ENCODE measurements at regions of chr1 and their contacts with region 1.

Region 1: DNA sequence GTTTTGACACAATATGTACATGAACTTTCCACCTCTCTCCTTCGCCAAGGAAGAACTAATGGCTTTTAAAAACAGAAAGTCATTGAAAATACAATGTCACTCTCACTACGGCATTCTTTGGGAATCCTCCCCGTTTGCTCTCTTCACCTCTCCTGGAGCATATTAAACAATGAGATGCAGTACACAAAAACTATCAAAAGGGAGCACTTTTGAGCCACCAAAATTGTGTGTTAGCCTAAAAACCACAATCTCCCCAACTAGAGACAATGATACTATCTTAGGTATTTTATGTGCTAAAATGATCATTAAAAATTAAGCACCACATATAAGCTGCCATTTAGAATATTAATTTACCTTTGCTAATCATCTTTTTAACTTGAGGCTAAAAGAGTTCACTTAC is 425.5 kb downstream of the KCTD3 start:
- DNase-seq: no peak
- ATAC-seq: no peak
- H3K4me3 ChIP-seq: no peak overlapping the region
- H3K4me3 Mint-ChIP-seq: no peak overlapping the region
- H3K27ac ChIP-seq: no peak overlapping the region
- H3K27ac Mint-ChIP-seq: no peak overlapping the region
- H3K4me1 ChIP-seq: no peaks in the 10 kb centered on the region
- H3K4me1 Mint-ChIP-seq: no peaks in the 10 kb centered on the region
- H3K27me3 ChIP-seq: no peaks in the 10 kb centered on the region
- H3K27me3 Mint-ChIP-seq: no peaks in the 10 kb centered on the region

Region 2: DNA sequence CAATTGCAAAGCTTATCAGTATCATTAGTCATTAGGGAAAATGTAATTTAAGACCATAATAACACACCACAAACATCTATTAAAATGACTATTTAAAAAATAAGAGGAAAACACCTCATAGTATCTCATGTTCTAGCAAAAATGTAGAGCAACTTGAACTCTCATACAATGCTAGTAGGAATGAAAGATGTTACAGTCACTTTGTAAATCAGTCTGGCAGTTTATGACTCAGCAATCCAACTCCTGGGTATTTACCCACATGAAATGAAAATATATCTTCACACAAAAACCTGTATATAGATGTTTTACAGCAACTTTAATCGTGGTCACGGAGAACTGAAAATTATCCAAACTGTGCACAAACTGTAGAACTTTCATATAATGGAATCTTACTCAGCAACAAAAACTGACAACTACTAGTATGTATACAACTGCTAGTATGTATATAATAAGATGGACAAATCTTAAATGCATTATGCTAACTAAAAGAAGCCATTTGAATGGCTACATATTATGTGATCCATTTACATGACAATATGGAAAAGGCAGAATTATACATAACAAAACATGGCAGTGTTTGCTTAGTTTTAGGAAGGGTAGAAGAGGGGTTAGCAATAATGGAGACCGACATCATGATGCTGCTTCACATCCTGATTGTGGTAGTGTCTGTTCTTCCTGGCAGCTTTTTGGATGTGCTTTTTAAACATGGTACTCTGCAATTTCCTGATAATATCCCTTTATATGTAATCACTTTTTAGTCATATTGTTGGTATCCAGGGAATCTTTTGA is 158.5 kb before region 1 on chr1:
- CTCF ChIA-PET with region 1: no interaction called
- POLR2A ChIA-PET with region 1: no interaction called
- DNase-seq: no peak
- ATAC-seq: no peak
- H3K4me3 ChIP-seq: no peak overlapping the region
- H3K4me3 Mint-ChIP-seq: no peak overlapping the region
- H3K27ac ChIP-seq: no peak overlapping the region
- H3K27ac Mint-ChIP-seq: no peak overlapping the region
- H3K4me1 ChIP-seq: no peaks in the 10 kb centered on the region
- H3K4me1 Mint-ChIP-seq: no peaks in the 10 kb centered on the region
- H3K27me3 ChIP-seq: no peaks in the 10 kb centered on the region
- H3K27me3 Mint-ChIP-seq: no peaks in the 10 kb centered on the region

Region 3: DNA sequence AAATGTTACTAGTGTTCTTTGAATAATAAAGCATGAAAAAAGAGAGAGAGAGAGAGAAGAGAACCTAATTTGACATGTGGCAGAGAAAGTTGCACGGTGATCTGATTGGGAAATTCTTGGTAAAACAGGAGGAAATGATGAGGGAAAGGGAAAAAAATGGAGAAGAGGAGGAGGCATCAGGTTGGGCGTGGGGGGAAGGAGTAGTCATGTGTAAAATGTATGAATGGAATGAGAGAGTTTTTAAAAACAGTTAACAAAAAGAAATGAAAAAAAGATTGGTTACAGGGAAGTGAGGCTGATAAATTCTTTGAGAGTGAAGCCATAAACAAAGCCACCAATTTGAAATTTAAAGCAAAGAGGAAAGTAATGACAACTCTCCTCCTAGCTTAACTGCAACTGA is 21.4 kb after region 1 on chr1:
- CTCF ChIA-PET with region 1: no interaction called
- POLR2A ChIA-PET with region 1: no interaction called
- DNase-seq: no peak
- ATAC-seq: no peak
- H3K4me3 ChIP-seq: no peak overlapping the region
- H3K4me3 Mint-ChIP-seq: no peak overlapping the region
- H3K27ac ChIP-seq: no peak overlapping the region
- H3K27ac Mint-ChIP-seq: no peak overlapping the region
- H3K4me1 ChIP-seq: no peaks in the 10 kb centered on the region
- H3K4me1 Mint-ChIP-seq: no peaks in the 10 kb centered on the region
- H3K27me3 ChIP-seq: no peaks in the 10 kb centered on the region
- H3K27me3 Mint-ChIP-seq: no peaks in the 10 kb centered on the region

Region 4: DNA sequence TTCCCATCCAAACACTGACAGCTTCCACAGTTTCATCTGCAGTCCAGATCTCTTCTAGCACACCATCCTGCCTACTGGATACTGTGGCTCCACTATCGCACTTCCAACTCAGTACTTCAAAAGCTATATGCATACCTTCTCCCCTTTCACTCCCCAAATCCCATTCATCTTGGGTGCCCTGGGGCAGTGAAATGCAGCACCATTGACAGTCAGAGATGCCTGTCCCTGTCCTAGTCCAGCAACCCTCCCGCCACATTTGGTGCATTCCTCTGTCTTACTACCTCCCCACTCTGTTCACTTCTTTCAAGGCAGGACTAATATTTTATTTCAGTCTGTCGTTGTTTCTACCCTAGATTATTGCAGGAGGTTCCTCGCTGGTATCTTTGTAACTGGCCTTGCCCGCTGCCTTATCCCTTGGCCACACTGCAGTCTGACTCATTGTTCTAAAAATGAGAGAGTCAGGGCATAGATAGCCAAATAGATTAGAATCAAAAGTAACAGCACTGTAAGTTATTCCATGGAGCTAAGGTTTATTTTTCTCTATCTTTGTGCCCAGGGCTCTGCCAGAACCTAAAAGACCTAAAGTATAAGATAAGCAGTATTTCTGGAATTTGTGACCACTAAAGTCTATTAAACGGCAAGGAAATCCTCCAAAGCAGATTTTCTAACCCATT is 633.9 kb after region 1 on chr1:
- CTCF ChIA-PET with region 1: interaction called in 1 of 2 experiments, 13 read pairs
- POLR2A ChIA-PET with region 1: no interaction called
- DNase-seq: no peak
- ATAC-seq: no peak
- H3K4me3 ChIP-seq: no peak overlapping the region
- H3K4me3 Mint-ChIP-seq: no peak overlapping the region
- H3K27ac ChIP-seq: no peak overlapping the region
- H3K27ac Mint-ChIP-seq: no peak overlapping the region
- H3K4me1 ChIP-seq: no peaks in the 10 kb centered on the region
- H3K4me1 Mint-ChIP-seq: no peaks in the 10 kb centered on the region
- H3K27me3 ChIP-seq: no peaks in the 10 kb centered on the region
- H3K27me3 Mint-ChIP-seq: no peaks in the 10 kb centered on the region